Gastrocnemius medialis (tissue), 4 donors: ENCODE measurements at regions of chr4 and their contacts with region 1.

Region 1: DNA sequence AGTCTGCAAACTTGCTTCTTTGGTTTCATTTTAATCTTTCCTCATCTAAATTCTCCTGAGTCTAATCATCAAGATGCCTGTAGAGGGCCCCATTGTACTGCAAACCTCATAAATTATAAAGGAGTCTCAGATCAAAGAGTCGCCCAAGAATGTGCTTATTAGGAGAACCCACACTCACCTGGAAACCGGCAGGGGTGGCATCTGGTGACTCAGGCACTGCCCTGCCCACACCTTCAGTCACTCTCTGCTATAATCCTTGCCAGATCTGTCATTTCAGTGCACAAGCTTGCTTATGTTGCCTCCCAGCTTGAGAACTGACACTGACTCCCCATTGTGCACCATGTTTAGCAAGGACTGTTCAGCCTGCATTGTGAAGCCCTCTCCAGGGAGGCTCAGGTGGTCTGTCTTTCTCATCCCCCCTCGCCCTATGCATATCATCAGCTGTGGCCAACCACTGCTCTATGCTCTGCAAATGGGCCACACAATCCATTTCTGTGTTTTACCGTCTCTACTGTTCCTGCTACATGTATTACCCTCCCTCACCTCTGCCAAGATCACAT is 12.4 kb downstream of the EPGN start:
- DNase-seq: no peak
- ATAC-seq: no peak
- H3K4me3 ChIP-seq: no peak overlapping the region
- H3K27ac ChIP-seq: no peak overlapping the region
- H3K4me1 ChIP-seq: no peaks in the 10 kb centered on the region
- H3K27me3 ChIP-seq: no peaks in the 10 kb centered on the region
- CTCF ChIP-seq: no peak
- POLR2A ChIP-seq: no peak

Region 2: DNA sequence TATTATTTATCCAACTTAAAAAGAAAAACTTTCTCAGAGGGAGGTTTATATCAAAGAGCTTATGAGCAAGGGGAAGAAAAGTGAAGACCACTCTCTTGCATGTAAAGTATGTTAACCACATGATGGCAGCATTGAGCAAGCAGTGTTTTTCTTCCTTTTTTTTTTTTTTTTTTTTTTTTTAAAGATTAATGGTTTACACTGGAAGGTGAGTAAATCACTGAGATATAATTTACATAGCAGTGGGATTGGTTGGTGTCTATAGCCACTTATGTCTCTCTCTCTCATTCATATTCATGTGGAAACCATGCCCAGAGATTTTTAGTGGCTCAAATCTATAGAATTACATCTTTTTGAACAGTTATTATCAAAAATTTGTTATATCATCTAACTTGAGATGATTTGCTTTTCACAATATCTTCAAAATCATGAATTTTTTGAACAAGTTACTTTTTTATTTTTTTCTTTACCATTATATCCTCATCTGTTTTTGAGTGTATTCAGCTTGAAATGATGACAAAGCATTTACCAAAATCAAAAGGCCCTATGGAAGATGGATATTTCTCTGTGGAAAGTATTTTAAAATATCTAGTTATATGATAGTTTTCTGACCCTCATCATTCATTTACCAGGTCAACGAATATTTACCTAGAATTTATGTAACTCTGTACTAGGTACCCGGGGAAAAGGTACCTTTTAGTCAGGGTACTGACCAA is 131.2 kb before region 1 on chr4:
- in situ Hi-C with region 1: loop called in 1 of 4 experiments (anchors 25 kb)
- intact Hi-C with region 1: no loop called
- DNase-seq: no peak
- ATAC-seq: no peak
- H3K4me3 ChIP-seq: no peak overlapping the region
- H3K27ac ChIP-seq: no peak overlapping the region
- H3K4me1 ChIP-seq: no peaks in the 10 kb centered on the region
- H3K27me3 ChIP-seq: no peaks in the 10 kb centered on the region
- CTCF ChIP-seq: peak in 3 of 5 experiments; percentile 18 to 62 (median 46)
- POLR2A ChIP-seq: no peak

Region 3: DNA sequence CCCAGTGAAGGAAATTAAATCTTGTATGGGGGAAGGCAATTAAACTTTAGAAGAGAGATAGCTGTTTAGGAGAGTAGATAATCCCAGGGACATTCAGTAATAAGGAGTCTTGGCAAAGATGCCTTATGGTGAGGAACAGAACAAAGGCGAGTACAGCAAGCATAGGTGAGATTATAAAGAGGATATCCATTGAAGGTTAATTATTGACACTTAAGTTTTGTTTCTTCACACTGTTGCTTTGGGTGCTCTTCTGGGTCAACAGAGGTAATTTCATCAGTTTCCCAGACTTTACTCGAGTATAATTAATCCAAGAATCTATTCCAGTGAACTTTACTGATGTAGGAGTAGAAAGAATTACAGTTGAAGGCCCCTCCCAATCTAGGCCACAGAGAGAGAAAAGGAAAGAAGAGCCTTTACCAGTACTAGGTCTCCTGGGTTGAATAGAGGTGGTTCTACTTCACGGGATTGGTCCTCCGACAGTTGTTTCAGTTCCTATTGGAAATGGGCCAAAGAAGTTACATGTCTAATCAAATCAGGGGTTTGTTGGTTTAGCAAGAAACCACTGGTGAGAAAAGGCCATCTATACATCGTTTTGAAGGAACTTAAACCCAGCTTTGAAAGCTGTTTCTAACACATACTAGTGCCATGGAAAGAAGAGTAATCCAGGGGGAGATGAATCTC is 14.8 kb after region 1 on chr4:
- in situ Hi-C with region 1: no loop called
- intact Hi-C with region 1: no loop called
- DNase-seq: no peak
- ATAC-seq: no peak
- H3K4me3 ChIP-seq: no peak overlapping the region
- H3K27ac ChIP-seq: no peak overlapping the region
- H3K4me1 ChIP-seq: no peaks in the 10 kb centered on the region
- H3K27me3 ChIP-seq: no peaks in the 10 kb centered on the region
- CTCF ChIP-seq: no peak
- POLR2A ChIP-seq: no peak